PC-3 (cell line): ENCODE measurements at regions of chr4 and their contacts with region 1.

Region 1: DNA sequence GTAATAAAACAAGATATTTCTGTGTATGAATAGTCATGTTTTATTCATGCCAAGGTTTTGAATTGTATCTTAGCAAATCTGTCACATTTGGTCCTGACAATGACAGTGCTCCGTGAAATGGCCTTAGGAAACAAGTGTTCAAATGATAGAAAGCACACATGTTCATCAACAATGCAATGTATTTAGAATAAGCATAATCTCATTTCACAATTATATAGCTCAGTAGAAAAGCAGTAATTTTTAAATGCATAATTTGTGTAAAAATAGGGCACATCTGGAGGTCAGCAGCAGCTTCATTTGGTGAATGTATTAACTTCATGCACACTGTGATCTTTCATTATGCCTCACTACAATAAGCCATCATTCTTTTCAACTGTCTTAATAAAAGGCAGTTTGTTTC is 380.4 kb downstream of the GPM6A start:
- DNase-seq: no peak
- ATAC-seq: no peak
- H3K4me3 ChIP-seq: no peak overlapping the region
- H3K27ac ChIP-seq: no peak overlapping the region
- H3K4me1 ChIP-seq: no peaks in the 10 kb centered on the region
- H3K27me3 ChIP-seq: no peaks in the 10 kb centered on the region
- CTCF ChIP-seq: no peak

Region 2: DNA sequence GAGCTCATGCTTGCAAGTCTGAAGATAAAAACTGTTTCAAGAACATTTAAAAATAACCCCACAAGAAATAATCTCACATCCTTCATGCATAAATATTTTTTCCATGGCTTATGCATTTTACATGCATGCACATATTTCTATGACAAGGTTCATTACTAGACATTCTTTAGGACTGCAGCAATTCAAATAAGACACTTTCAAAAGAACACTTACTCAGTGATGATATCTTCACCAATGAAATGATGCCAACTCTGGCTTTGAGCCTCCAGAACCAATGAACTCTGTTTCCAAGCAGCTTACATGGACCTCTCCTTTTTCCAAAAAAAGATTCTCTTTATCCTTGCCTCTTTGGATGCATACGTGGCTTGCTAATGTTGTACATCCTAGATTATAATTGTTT is 233.6 kb before region 1 on chr4:
- CTCF ChIA-PET with region 1: no interaction called
- POLR2A ChIA-PET with region 1: no interaction called
- intact Hi-C with region 1: loop called (anchors 5 kb)
- DNase-seq: peak; percentile 6
- ATAC-seq: no peak
- H3K4me3 ChIP-seq: peak overlapping the region; percentile 62; the same call in 1 of the 2 replicates
- H3K27ac ChIP-seq: no peak overlapping the region
- H3K4me1 ChIP-seq: peaks cover 29% of the 10 kb centered on the region
- H3K27me3 ChIP-seq: no peaks in the 10 kb centered on the region
- CTCF ChIP-seq: no peak